ENCODE measurements at regions of chr12 and their contacts with region 1.

Region 1: GRCh38 chr12:94149119-94149780 is 873 bp downstream of the PLXNC1 start:
- DNase-seq: peak; percentile 72 to 83 (median 79)
- H3K4me3 ChIP-seq: peak overlapping the region; percentile 65 to 93 (median 78)
- H3K27ac ChIP-seq: peak overlapping the region in 1 of 2 experiments; percentile 47
- H3K4me1 ChIP-seq: peaks cover 11 to 60% (median 48%) of the 10 kb centered on the region in 4 experiments
- H3K27me3 ChIP-seq: peaks cover 0 to 3% (median 0%) of the 10 kb centered on the region in 5 experiments

Region 2: GRCh38 chr12:94172973-94173372 is 23.7 kb after region 1 on chr12:
- CTCF ChIA-PET with region 1: interaction called, 193 read pairs
- POLR2A ChIA-PET with region 1: interaction called, 7 read pairs
- DNase-seq: peak in 2 of 3 donors; percentile 78 to 79
- H3K4me3 ChIP-seq: peak overlapping the region in 2 of 7 experiments; percentile 30 to 63
- H3K27ac ChIP-seq: peak overlapping the region in 1 of 2 experiments; percentile 75
- H3K4me1 ChIP-seq: peaks cover 40 to 75% (median 63%) of the 10 kb centered on the region in 4 experiments
- H3K27me3 ChIP-seq: no peaks in the 10 kb centered on the region

Region 3: GRCh38 chr12:94193168-94193567 is 43.9 kb after region 1 on chr12:
- CTCF ChIA-PET with region 1: interaction called, 12 read pairs
- POLR2A ChIA-PET with region 1: no interaction called
- DNase-seq: peak in 2 of 3 donors; percentile 42 to 62
- H3K4me3 ChIP-seq: peak overlapping the region in 1 of 7 experiments; percentile 7
- H3K27ac ChIP-seq: no peak overlapping the region
- H3K4me1 ChIP-seq: peaks cover 0 to 32% (median 21%) of the 10 kb centered on the region in 4 experiments
- H3K27me3 ChIP-seq: no peaks in the 10 kb centered on the region

Region 4: GRCh38 chr12:94254270-94254669 is 105.0 kb after region 1 on chr12:
- CTCF ChIA-PET with region 1: interaction called, 13 read pairs
- POLR2A ChIA-PET with region 1: no interaction called
- DNase-seq: no peak
- H3K4me3 ChIP-seq: no peak overlapping the region
- H3K27ac ChIP-seq: no peak overlapping the region
- H3K4me1 ChIP-seq: no peaks in the 10 kb centered on the region
- H3K27me3 ChIP-seq: no peaks in the 10 kb centered on the region